ENCODE measurements at regions of chr11 and their contacts with region 1.

Region 1: GRCh38 chr11:86193297-86194095 is 51.1 kb upstream of the EED start:
- DNase-seq: peak; percentile 75
- CTCF ChIP-seq: peak; percentile 60

Region 2: DNA sequence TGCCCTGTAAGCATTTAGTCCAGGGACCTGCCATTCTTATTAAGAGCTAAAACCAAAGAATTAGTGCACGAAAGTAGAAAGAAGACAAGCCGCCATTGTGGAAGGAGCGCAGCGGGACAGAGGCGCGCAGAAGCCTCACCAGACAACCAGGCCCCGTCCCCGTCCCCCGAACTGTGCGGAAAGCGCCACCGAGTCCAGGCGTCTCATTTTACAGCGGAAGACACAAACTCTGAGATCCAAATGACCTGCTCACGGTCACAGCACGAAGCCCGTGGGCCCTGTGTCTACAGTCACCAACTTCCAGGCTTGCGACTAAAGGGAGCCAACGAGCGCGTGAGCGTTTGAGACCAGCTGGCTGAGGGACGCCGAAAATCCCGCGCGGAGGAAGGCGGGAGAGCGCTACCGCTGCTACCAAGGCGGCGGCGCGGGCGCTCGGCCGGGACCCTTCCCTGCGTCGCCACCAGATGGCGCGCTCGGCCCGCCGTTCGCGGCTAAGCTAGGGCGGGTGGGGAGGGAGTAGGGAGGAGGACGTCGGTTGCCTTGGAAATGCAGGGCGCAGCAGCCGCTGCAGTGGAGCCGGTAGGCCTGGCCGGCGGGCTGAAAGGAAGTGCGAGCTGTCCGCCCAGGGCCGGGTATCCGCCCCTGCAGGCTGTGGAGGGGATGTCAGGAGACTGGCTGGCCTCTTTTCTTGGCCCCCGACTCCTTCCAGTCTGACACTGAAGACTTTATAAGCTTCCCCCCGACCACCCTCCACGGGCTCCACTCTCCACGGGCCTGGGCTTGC is 338.7 kb before region 1 on chr11:
- CTCF ChIA-PET with region 1: interaction called, 11 read pairs
- POLR2A ChIA-PET with region 1: no interaction called
- DNase-seq: peak; percentile 94
- CTCF ChIP-seq: peak; percentile 83

Region 3: DNA sequence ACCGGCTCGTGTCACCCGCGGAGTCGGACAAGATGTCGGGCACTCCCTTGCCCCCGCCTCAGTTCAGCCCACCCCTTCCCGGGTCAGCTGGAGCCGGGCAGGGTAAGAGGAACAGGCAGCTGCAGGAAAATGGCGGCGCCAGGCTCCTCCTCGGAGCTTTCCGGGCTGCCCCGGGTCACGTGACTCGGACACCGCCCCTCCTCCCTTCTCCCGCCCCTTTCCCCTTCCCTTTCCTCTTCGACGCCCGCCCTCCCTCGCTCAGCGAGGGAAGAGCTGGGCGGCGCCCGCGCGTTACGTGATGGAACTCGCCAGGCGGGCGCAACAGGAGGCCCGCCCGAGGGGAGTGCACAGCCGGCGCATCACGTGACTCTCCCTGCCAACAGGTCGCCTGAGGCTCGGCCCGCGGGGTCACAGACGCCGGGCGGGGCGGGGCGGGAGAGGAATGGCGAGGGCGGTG is 124.5 kb before region 1 on chr11 and contains the start of gene PICALM:
- CTCF ChIA-PET with region 1: interaction called, 16 read pairs
- POLR2A ChIA-PET with region 1: interaction called, 3 read pairs
- DNase-seq: peak; percentile 96
- CTCF ChIP-seq: no peak

Region 4: GRCh38 chr11:86162239-86162638 is 31.3 kb before region 1 on chr11:
- CTCF ChIA-PET with region 1: interaction called, 10 read pairs
- POLR2A ChIA-PET with region 1: no interaction called
- DNase-seq: no peak
- CTCF ChIP-seq: no peak

Region 5: DNA sequence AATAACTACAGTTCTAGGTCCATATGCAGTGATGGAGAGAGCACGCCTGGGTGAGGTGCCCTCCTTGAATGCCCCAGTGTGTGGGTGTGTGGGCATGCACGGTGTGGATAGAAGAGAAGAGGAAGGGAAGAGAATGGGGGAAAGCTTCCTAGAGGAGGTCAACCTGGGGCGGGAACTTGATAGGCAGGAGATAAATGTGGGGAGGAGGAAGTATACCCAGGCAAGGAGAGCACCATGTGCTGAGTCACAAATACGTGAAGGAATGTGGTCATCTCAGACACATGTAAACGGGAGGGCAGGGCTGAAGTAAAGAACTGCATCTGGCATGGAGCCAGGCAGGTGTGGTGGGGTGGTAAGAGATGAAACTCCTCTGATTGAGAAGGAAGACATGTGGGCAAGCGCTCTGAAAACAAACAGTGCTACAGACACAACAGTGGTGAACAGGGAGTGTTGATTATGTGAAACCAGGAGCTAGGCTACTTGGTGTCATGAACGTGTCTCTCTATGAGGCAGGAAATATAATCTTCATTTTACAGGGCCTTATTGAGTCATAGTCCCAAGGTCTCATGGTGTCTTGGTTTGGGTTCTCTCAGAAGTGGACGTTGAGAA is 10.4 kb before region 1 on chr11:
- CTCF ChIA-PET with region 1: interaction called, 24 read pairs
- POLR2A ChIA-PET with region 1: no interaction called
- DNase-seq: no peak
- CTCF ChIP-seq: no peak

Region 6: GRCh38 chr11:86211619-86212018 is 18.1 kb after region 1 on chr11:
- CTCF ChIA-PET with region 1: interaction called, 20 read pairs
- POLR2A ChIA-PET with region 1: no interaction called
- DNase-seq: peak; percentile 39
- CTCF ChIP-seq: no peak

Region 7: GRCh38 chr11:86218125-86219084 is 24.9 kb after region 1 on chr11:
- CTCF ChIA-PET with region 1: interaction called, 21 read pairs
- POLR2A ChIA-PET with region 1: no interaction called
- DNase-seq: peak; percentile 48
- CTCF ChIP-seq: peak; percentile 54